ENCODE measurements at regions of chr18 and their contacts with region 1.

Region 1: DNA sequence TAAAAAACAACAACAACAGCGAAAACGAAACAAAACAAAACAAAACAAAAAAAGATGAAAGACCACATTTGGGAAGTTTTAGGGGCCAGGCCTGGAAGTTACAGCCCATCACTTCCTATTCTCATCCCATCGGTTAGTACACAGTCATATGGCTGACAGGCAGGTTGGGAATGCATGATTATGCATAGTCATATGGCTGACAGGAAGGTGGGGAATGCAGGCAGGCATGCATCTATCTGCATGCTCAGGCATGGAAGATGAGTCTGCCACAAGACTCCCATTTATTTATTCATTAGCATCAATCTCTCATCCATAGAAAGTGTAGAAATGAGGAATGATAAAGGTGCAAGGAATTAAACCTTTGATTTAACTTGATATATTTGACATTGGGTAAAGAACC is 325.3 kb upstream of the MEX3C start:
- DNase-seq: no peak
- ATAC-seq: no peak
- H3K4me3 ChIP-seq: no peak overlapping the region
- H3K27ac ChIP-seq: no peak overlapping the region
- H3K4me1 ChIP-seq: no peaks in the 10 kb centered on the region
- H3K27me3 ChIP-seq: no peaks in the 10 kb centered on the region

Region 2: GRCh38 chr18:51461956-51462355 is 60.9 kb before region 1 on chr18:
- intact Hi-C with region 1: loop called in 1 of 4 experiments (anchors 5 kb)
- DNase-seq: no peak
- ATAC-seq: no peak
- H3K4me3 ChIP-seq: no peak overlapping the region
- H3K27ac ChIP-seq: no peak overlapping the region
- H3K4me1 ChIP-seq: no peaks in the 10 kb centered on the region
- H3K27me3 ChIP-seq: no peaks in the 10 kb centered on the region

Region 3: DNA sequence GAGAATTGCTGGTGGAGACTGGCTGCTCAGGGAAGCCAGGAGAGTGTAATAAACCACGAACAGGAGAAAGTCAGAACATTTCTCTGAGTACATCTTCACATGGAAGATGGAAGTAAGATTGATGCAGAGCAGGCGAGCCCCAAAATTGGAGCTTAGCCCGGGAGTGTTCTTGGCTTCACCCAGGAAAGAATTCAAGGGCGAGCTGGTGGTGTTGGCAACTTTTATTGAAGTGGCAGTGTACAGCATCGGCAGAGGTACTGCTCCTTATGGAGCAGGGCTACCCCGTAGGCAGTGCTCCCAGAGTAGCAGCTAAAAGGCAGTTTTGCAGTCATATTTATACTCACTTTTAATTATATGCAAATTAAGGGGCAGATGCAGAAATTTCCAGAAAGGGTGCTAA is 43.9 kb before region 1 on chr18:
- intact Hi-C with region 1: loop called in 1 of 4 experiments (anchors 10 kb)
- DNase-seq: no peak
- ATAC-seq: no peak
- H3K4me3 ChIP-seq: no peak overlapping the region
- H3K27ac ChIP-seq: no peak overlapping the region
- H3K4me1 ChIP-seq: no peaks in the 10 kb centered on the region
- H3K27me3 ChIP-seq: no peaks in the 10 kb centered on the region